ENCODE measurements at regions of chrX and their contacts with region 1.

Region 1: GRCh38 chrX:150898343-150899190 is at the start of gene CD99L2:
- DNase-seq: peak; percentile 88 to 95 (median 91)
- ATAC-seq: peak; percentile 94 to 98 (median 98)
- H3K4me3 ChIP-seq: peak within 1 kb of the TSS; percentile 46 to 91 (median 66)
- H3K27ac ChIP-seq: peak within 1 kb of the TSS; percentile 32 to 84 (median 80)
- H3K4me1 ChIP-seq: peaks cover 0 to 12% (median 0%) of the 10 kb centered on the region in 12 donors
- H3K27me3 ChIP-seq: no peaks in the 10 kb centered on the region
- CTCF ChIP-seq: no peak
- POLR2A ChIP-seq: peak in 1 of 2 donors; percentile 45
- total RNA-seq, gene CD99L2: 70.8 to 115 (median 94.6) TPM

Region 2: GRCh38 chrX:150967786-150968185 is 69.2 kb after region 1 on chrX:
- intact Hi-C with region 1: no loop called
- DNase-seq: no peak
- ATAC-seq: no peak
- H3K4me3 ChIP-seq: no peak overlapping the region
- H3K27ac ChIP-seq: no peak overlapping the region
- H3K4me1 ChIP-seq: no peaks in the 10 kb centered on the region
- H3K27me3 ChIP-seq: peaks cover 0 to 9% (median 0%) of the 10 kb centered on the region in 9 donors
- CTCF ChIP-seq: no peak
- POLR2A ChIP-seq: no peak

Region 3: GRCh38 chrX:150982788-150983520 is 84.4 kb after region 1 on chrX and contains the start of gene HMGB3:
- intact Hi-C with region 1: loop called in 1 of 10 experiments (anchors 10 kb)
- DNase-seq: peak; percentile 73 to 90 (median 89)
- ATAC-seq: peak; percentile 88 to 99 (median 98)
- H3K4me3 ChIP-seq: peak within 1 kb of the TSS; percentile 8 to 65 (median 52)
- H3K27ac ChIP-seq: peak within 1 kb of the TSS in 1 of 12 donors; percentile 55
- H3K4me1 ChIP-seq: peaks cover 0 to 4% (median 0%) of the 10 kb centered on the region in 12 donors
- H3K27me3 ChIP-seq: no peaks in the 10 kb centered on the region
- CTCF ChIP-seq: no peak
- POLR2A ChIP-seq: peak in 1 of 2 donors; percentile 49
- total RNA-seq, gene HMGB3: 2.6 to 27.8 (median 10.4) TPM

Region 4: GRCh38 chrX:151082076-151082948 is 183.7 kb after region 1 on chrX:
- intact Hi-C with region 1: loop called in 1 of 10 experiments (anchors 5 kb)
- DNase-seq: peak; percentile 38 to 76 (median 53)
- ATAC-seq: peak; percentile 73 to 92 (median 88)
- H3K4me3 ChIP-seq: no peak overlapping the region
- H3K27ac ChIP-seq: no peak overlapping the region
- H3K4me1 ChIP-seq: peaks cover 0 to 8% (median 0%) of the 10 kb centered on the region in 12 donors
- H3K27me3 ChIP-seq: peaks cover 0 to 45% (median 0%) of the 10 kb centered on the region in 9 donors
- CTCF ChIP-seq: peak; percentile 77 to 93 (median 85)
- POLR2A ChIP-seq: no peak

Region 5: DNA sequence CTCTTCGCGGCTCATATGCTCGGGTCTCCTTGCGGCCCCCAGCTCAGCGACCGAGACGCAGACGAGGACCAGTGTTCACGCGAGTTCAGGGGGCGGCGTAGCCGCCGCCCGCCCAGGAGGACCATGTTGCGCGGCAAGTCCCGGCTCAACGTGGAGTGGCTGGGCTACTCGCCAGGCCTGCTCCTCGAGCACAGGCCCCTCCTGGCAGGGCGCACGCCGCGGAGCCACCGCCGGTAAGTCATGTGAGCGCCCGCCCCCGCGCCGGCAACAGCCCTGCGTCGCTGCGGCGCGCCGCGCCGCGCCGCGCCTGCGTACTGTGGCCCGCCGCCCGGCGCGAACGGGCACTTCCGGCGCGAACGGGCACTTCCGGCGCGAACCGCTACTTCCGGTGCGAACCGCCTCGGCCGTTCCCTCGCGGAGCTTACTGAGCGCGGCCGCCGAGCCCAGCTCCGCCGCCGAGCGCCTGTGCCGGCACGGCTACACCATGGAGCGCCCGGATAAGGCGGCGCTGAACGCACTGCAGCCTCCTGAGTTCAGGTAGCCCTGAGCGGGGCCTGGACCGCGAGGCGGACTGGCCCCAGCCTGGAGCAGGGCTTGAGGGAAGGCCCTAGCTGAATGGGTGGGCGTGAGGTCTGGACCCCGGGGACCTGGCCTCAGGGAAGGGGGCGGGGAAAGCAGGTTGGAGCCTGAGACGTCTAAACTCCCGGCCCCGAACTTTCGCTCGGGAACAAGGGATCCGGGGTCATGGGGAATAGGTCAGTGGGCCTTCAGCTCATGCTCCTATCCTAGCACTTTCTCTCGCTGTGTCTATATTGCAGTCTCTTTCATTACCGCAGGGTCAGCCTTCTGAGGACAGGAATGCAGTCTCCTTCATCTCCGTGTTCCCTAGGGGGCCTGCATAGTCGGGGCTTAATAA is 498.5 kb after region 1 on chrX and contains the start of gene VMA21:
- intact Hi-C with region 1: loop called in 1 of 10 experiments (anchors 10 kb)
- DNase-seq: peak; percentile 88 to 94 (median 92)
- ATAC-seq: peak; percentile 94 to 99 (median 98)
- H3K4me3 ChIP-seq: peak within 1 kb of the TSS; percentile 50 to 91 (median 77)
- H3K27ac ChIP-seq: peak within 1 kb of the TSS; percentile 82 to 96 (median 91)
- H3K4me1 ChIP-seq: peaks cover 0 to 21% (median 8%) of the 10 kb centered on the region in 12 donors
- H3K27me3 ChIP-seq: no peaks in the 10 kb centered on the region
- CTCF ChIP-seq: no peak
- POLR2A ChIP-seq: peak in 1 of 2 donors; percentile 42
- total RNA-seq, gene VMA21: 13.9 to 25.8 (median 21.1) TPM

Measured in heart left ventricle (tissue), 16 donors.